ENCODE measurements at regions of chr20 and their contacts with region 1.

Region 1: DNA sequence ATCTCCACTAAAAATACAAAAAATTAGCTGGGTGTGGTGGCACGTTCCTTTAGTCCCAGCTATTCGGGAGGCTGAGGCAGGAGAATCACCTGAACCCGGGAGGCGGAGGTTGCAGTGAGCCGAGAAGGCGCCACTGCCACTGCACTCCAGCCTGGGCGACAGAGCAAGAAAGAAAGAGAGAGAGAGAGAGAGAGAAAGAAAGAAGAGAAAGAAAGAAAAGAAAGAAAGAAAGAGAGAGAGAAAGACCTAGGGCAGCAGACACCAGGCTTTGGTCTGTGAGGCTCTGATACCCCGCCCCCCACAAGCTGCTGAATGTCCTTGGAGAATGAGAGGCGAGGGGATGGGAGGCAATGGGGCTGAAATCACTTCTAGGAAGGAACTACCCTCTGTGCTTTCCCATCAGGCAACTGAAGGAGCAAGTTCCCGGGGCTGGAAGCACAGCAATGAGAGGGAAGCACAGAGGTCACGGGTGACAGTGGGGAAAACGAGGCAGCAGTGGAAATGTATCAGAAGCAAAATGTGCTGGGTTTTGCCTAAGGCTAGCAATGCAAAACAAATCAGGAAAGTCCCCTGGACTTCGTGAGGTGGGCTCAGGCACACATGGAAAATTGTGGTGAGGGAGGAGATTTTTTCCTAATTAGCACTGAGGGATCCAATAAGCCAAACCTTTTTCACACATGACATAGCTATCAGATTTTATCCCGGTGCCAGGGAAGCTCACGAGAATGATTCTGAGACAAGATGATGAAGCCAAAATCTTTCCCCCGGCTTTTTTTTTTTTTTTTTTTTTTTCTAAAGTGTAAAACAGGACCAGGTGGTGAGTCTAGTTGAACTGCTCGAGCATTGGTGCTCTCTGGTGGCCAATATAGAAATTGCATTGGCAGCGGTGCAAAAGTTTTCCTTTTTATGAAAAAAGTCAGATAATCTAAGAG is 16.9 kb upstream of the ARFGEF2 start:
- DNase-seq: peak; percentile 88
- H3K4me3 ChIP-seq: peak overlapping the region; percentile 7
- H3K27ac ChIP-seq: peak overlapping the region; percentile 82
- H3K4me1 ChIP-seq: peaks cover 21% of the 10 kb centered on the region
- H3K27me3 ChIP-seq: no peaks in the 10 kb centered on the region
- CTCF ChIP-seq: peak; percentile 87

Region 2: GRCh38 chr20:48620519-48621254 is 283.9 kb before region 1 on chr20:
- CTCF ChIA-PET with region 1: interaction called, 17 read pairs
- POLR2A ChIA-PET with region 1: no interaction called
- intact Hi-C with region 1: no loop called
- DNase-seq: peak; percentile 86
- H3K4me3 ChIP-seq: no peak overlapping the region
- H3K27ac ChIP-seq: no peak overlapping the region
- H3K4me1 ChIP-seq: peaks cover 13% of the 10 kb centered on the region
- H3K27me3 ChIP-seq: no peaks in the 10 kb centered on the region
- CTCF ChIP-seq: peak; percentile 82

Region 3: GRCh38 chr20:48657475-48658470 is 246.9 kb before region 1 on chr20:
- CTCF ChIA-PET with region 1: interaction called, 44 read pairs
- POLR2A ChIA-PET with region 1: no interaction called
- intact Hi-C with region 1: loop called (anchors 1 kb)
- DNase-seq: peak; percentile 86
- H3K4me3 ChIP-seq: no peak overlapping the region
- H3K27ac ChIP-seq: peak overlapping the region; percentile 71
- H3K4me1 ChIP-seq: peaks cover 20% of the 10 kb centered on the region
- H3K27me3 ChIP-seq: no peaks in the 10 kb centered on the region
- CTCF ChIP-seq: peak; percentile 88

Region 4: GRCh38 chr20:48849299-48849698 is 55.3 kb before region 1 on chr20:
- CTCF ChIA-PET with region 1: no interaction called
- POLR2A ChIA-PET with region 1: interaction called, 18 read pairs
- intact Hi-C with region 1: no loop called
- DNase-seq: no peak
- H3K4me3 ChIP-seq: no peak overlapping the region
- H3K27ac ChIP-seq: no peak overlapping the region
- H3K4me1 ChIP-seq: peaks cover 37% of the 10 kb centered on the region
- H3K27me3 ChIP-seq: no peaks in the 10 kb centered on the region
- CTCF ChIP-seq: no peak

Region 5: GRCh38 chr20:48945851-48946514 is 41.4 kb after region 1 on chr20:
- CTCF ChIA-PET with region 1: interaction called, 3 read pairs
- POLR2A ChIA-PET with region 1: interaction called, 13 read pairs
- intact Hi-C with region 1: no loop called
- DNase-seq: no peak
- H3K4me3 ChIP-seq: no peak overlapping the region
- H3K27ac ChIP-seq: no peak overlapping the region
- H3K4me1 ChIP-seq: no peaks in the 10 kb centered on the region
- H3K27me3 ChIP-seq: no peaks in the 10 kb centered on the region
- CTCF ChIP-seq: no peak

Region 6: DNA sequence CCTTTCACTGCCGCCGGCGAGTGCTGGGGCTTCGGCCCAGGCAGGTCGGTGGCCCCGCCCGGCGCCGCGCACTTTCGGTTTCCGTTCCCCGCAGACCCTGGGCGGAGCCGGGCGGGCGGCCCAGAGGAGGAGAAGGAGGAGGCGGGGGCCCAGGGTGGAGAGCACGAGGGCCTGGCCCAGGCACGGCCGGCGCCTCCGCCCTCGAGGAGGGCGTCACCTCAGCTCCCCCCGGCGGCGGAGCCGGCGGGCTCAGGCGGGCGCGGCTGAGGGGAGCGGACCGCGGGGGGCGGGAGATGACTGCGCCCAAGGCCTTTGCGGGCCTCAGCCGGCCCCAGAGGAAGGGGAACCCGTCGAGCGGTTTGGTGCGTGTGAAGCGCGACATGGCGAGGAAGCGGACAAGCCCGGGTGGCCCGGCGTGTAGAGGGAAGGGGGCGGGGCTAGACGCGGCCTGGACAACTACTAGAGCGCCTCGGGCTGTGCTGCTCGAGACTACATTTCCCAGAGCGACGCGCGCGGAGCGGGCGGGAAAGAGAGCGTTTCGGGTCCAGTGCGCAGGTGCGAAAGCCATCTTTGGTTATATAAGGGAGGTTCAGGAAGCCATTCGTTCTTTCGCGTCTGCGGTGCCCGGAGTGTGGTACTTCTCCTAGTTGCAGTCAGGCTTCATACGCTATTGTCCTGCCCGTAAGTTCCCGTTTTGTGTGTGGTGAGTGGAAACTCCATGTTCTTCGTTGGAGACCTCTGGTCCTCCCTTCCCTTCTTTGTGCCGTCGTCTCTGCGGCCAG is 373.6 kb after region 1 on chr20 and contains the start of gene ZNFX1:
- CTCF ChIA-PET with region 1: no interaction called
- POLR2A ChIA-PET with region 1: no interaction called
- intact Hi-C with region 1: no loop called
- DNase-seq: peak; percentile 99
- H3K4me3 ChIP-seq: peak within 1 kb of the TSS; percentile 81
- H3K27ac ChIP-seq: peak within 1 kb of the TSS; percentile 94
- H3K4me1 ChIP-seq: peaks cover 8% of the 10 kb centered on the region
- H3K27me3 ChIP-seq: no peaks in the 10 kb centered on the region
- CTCF ChIP-seq: peak; percentile 8; the same call in 1 of the 2 replicates
- total RNA-seq, gene ZNFX1: 15.4 and 19.0 TPM in 2 replicates

Region 7: GRCh38 chr20:49567421-49568334 is 663.0 kb after region 1 on chr20 and contains the start of gene PTGIS:
- CTCF ChIA-PET with region 1: no interaction called
- POLR2A ChIA-PET with region 1: no interaction called
- intact Hi-C with region 1: no loop called
- DNase-seq: no peak
- H3K4me3 ChIP-seq: peak within 1 kb of the TSS; percentile 21
- H3K27ac ChIP-seq: no peak within 1 kb of the TSS
- H3K4me1 ChIP-seq: no peaks in the 10 kb centered on the region
- H3K27me3 ChIP-seq: peaks cover 45% of the 10 kb centered on the region
- CTCF ChIP-seq: no peak
- total RNA-seq, gene PTGIS: not detected in 2 replicates